Gastrocnemius medialis (tissue), 4 donors: ENCODE measurements at regions of chr12 and their contacts with region 1.

Region 1: GRCh38 chr12:106247674-106248311 is at the start of gene CKAP4:
- DNase-seq: peak; percentile 53 to 63
- ATAC-seq: peak; percentile 61 to 73
- H3K4me3 ChIP-seq: peak within 1 kb of the TSS; percentile 65 to 91 (median 86)
- H3K27ac ChIP-seq: peak within 1 kb of the TSS; percentile 90 to 95 (median 94)
- H3K4me1 ChIP-seq: peaks cover 39 to 42% of the 10 kb centered on the region in 2 donors
- H3K27me3 ChIP-seq: no peaks in the 10 kb centered on the region
- CTCF ChIP-seq: peak in 1 of 5 experiments; percentile 3
- POLR2A ChIP-seq: peak; percentile 61 to 62
- total RNA-seq, gene CKAP4: 9.7 to 17.6 (median 15.7) TPM

Region 2: DNA sequence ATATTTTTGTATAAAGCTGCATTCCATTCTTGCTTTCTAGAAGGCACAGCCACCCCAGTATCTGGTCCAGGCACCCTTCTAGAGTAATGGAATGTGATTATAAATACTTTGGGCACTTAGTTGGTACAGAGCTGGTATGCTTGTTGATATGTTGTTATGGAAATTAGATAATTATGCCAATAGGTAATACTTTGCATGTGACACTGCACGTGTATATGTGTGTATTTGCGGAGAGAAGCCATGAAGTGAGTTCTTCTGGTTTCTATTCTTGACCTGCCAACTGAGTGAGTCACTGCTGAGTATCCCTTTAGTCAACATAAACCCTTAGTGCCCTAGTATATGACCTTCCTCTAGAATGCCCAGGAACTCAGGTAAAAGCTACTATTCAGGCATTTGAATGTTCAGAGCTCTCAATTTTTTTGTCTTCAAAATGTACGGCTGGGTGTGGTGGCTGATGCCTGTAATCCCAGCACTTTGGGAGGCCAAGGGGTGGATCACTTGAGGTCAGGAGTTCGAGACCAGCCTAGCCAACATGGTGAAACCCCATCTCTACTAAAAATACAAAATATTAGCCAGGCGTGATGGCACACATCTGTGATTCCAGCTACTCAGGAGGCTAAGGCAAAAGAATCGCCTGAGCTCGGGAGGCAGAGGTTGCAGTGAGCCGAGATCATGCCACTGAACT is 48.5 kb after region 1 on chr12:
- in situ Hi-C with region 1: no loop called
- intact Hi-C with region 1: loop called (anchors 2 kb)
- DNase-seq: peak in 1 of 2 donors; percentile 31
- ATAC-seq: peak; percentile 62 to 84
- H3K4me3 ChIP-seq: no peak overlapping the region
- H3K27ac ChIP-seq: peak overlapping the region in 2 of 4 donors; percentile 23 to 40
- H3K4me1 ChIP-seq: peaks cover 22 to 24% of the 10 kb centered on the region in 2 donors
- H3K27me3 ChIP-seq: no peaks in the 10 kb centered on the region
- CTCF ChIP-seq: no peak
- POLR2A ChIP-seq: no peak